Endothelial cell of umbilical vein (primary cell): ENCODE measurements at regions of chr1 and their contacts with region 1.

Region 1: GRCh38 chr1:172906778-172907592 is 143.8 kb downstream of the TNFSF18 start:
- DNase-seq: peak; percentile 96
- H3K4me3 ChIP-seq: no peak overlapping the region
- H3K27ac ChIP-seq: peak overlapping the region; percentile 88
- H3K4me1 ChIP-seq: peaks cover 84% of the 10 kb centered on the region
- H3K27me3 ChIP-seq: no peaks in the 10 kb centered on the region
- CTCF ChIP-seq: no peak
- POLR2A ChIP-seq: peak; percentile 58

Region 2: DNA sequence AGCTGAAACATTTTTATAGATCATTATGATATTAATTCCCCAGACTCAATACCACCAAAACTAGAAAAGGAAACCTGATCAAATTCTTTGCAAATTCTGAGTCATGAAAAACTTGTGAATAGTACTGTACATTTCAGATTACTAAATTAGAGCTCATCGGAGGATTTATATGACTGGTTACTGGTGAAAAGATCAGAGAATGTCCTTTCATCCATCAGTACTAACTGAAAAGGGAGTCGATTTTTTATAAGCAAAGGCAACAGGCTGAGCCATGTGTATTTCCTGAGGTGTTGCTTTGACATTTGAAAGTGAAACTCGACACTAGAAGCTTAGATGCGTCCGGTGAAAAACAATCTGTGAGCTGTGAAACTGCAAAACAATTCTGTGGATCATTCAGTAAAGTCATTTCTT is 11.9 kb before region 1 on chr1:
- CTCF ChIA-PET with region 1: interaction called, 5 read pairs
- POLR2A ChIA-PET with region 1: interaction called, 9 read pairs
- dilution Hi-C with region 1: no loop called
- intact Hi-C with region 1: loop called (anchors 1 kb)
- DNase-seq: peak; percentile 85
- H3K4me3 ChIP-seq: peak overlapping the region in 1 of 3 experiments; percentile 41
- H3K27ac ChIP-seq: peak overlapping the region; percentile 65
- H3K4me1 ChIP-seq: peaks cover 70% of the 10 kb centered on the region
- H3K27me3 ChIP-seq: no peaks in the 10 kb centered on the region
- CTCF ChIP-seq: no peak
- POLR2A ChIP-seq: no peak

Region 3: GRCh38 chr1:172948457-172948856 is 41.5 kb after region 1 on chr1:
- CTCF ChIA-PET with region 1: interaction called, 3 read pairs
- POLR2A ChIA-PET with region 1: interaction called, 10 read pairs
- dilution Hi-C with region 1: no loop called
- intact Hi-C with region 1: loop called (anchors 1 kb)
- DNase-seq: peak; percentile 89
- H3K4me3 ChIP-seq: no peak overlapping the region
- H3K27ac ChIP-seq: peak overlapping the region; percentile 95
- H3K4me1 ChIP-seq: peaks cover 36% of the 10 kb centered on the region
- H3K27me3 ChIP-seq: no peaks in the 10 kb centered on the region
- CTCF ChIP-seq: no peak
- POLR2A ChIP-seq: peak; percentile 25

Region 4: DNA sequence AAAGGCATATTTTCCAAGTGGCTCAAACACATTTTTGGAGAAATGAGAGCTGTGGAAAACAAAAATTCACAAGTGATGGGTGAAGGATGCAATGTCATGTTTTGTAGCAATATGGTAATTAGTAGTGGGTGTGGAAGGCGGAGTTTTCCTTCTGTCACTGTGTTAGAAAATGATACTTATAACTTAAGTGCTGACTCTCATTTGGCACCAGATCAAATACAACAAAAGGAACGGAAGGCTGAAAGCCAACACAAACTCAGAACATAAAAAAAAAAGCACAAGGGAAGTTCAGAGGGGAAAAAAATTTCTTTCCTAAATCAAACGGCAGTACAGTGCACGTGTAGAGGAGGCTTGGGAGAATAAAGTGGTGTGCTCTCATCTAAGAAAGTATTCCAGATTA is 143.9 kb after region 1 on chr1 and contains the start of gene TNFSF18:
- CTCF ChIA-PET with region 1: no interaction called
- POLR2A ChIA-PET with region 1: no interaction called
- dilution Hi-C with region 1: no loop called
- intact Hi-C with region 1: loop called (anchors 1 kb)
- DNase-seq: peak; percentile 96
- H3K4me3 ChIP-seq: peak within 1 kb of the TSS in 2 of 3 experiments; percentile 1 to 63
- H3K27ac ChIP-seq: peak within 1 kb of the TSS; percentile 54
- H3K4me1 ChIP-seq: peaks cover 52% of the 10 kb centered on the region
- H3K27me3 ChIP-seq: no peaks in the 10 kb centered on the region
- CTCF ChIP-seq: no peak
- POLR2A ChIP-seq: no peak
- total RNA-seq, gene TNFSF18: 39.4 and 39.9 TPM in 2 replicates

Region 5: DNA sequence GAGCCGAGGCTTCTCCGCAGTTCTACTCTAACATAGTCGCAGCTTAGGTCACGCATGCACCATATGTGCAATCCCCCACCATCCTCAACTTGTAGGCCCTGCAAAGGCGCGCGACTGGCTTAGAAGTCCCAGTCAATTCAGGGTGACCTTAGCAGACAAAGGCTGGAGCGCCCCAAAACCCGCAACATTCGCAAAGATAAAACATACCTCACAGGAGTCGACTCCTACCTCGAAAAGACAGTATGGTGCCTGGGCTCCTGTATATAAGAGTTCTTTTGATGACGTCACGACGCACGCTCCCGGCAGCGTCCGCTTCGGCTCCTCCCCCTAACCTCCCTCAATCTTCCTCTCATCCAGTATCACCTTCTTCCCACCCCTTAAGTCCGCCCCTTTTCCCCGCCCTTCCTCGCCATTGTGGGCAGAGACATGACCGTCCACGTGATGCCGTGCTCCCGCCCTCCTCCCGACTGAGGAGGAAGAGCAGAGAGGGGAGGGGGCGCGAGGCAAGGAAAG is 960.8 kb after region 1 on chr1 and contains the start of gene GAS5:
- CTCF ChIA-PET with region 1: no interaction called
- POLR2A ChIA-PET with region 1: no interaction called
- dilution Hi-C with region 1: no loop called
- intact Hi-C with region 1: loop called (anchors 2 kb)
- DNase-seq: peak; percentile 99
- H3K4me3 ChIP-seq: peak within 1 kb of the TSS; percentile 36 to 99 (median 90)
- H3K27ac ChIP-seq: peak within 1 kb of the TSS; percentile 64
- H3K4me1 ChIP-seq: peaks cover 48% of the 10 kb centered on the region
- H3K27me3 ChIP-seq: no peaks in the 10 kb centered on the region
- CTCF ChIP-seq: no peak
- POLR2A ChIP-seq: peak; percentile 100
- total RNA-seq, gene GAS5: 302 and 343 TPM in 2 replicates